Vagina (tissue), 2 donors: ENCODE measurements at regions of chr3 and their contacts with region 1.

Region 1: GRCh38 chr3:105334138-105334882 is 32.4 kb upstream of the ALCAM start:
- DNase-seq: no peak
- H3K4me3 ChIP-seq: no peak overlapping the region
- H3K27ac ChIP-seq: no peak overlapping the region
- H3K4me1 ChIP-seq: no peaks in the 10 kb centered on the region
- H3K27me3 ChIP-seq: no peaks in the 10 kb centered on the region
- CTCF ChIP-seq: no peak
- POLR2A ChIP-seq: no peak

Region 2: DNA sequence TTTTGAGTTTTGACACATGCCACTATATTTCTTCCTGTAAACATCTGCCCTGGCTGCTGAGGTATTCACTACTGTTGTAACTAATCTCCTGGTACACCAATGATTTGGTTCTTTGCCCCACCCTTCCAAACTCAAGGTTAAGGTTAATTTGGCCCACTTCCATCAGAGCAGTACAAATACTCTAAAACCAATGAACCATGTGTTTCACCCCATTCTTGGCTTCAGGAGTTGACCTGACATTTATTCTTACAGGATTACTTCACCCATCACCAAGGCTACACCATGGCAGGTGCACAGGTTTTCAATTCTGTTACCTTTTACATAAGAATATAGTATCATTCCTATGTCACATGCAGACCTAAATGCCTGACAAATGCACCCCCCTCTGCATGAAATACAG is 1719.6 kb before region 1 on chr3:
- intact Hi-C with region 1: loop called (anchors 5 kb)
- DNase-seq: no peak
- H3K4me3 ChIP-seq: no peak overlapping the region
- H3K27ac ChIP-seq: no peak overlapping the region
- H3K4me1 ChIP-seq: no peaks in the 10 kb centered on the region
- H3K27me3 ChIP-seq: no peaks in the 10 kb centered on the region
- CTCF ChIP-seq: no peak
- POLR2A ChIP-seq: no peak

Region 3: DNA sequence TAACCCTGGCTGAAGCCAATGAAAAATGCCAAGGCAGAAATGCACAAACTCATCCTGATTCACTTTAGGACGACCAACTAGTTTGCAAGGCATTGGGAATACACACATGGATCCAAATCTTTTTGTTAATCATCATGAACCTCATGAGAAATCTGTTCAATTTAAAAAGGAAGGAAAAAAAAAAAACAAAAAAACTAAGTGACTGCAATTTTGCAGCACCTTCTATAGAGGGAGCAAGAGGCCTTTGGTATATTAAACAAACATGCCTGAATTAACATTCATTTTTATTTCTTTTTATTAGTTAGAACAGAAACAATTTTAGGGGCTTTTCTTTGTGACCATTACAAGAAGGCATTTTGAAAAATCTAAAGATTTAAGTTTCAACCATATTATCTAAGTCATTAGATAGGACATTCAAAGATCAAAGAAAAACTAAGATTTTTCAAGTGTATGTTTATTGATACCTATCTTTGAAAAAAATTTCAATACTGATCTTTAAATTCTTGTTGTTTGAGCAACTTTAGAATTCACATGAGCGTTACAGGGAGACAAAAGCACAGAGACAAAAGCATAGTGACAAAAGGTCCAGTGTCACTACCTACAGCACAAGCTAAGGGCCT is 352.1 kb after region 1 on chr3:
- intact Hi-C with region 1: no loop called
- DNase-seq: no peak
- H3K4me3 ChIP-seq: no peak overlapping the region
- H3K27ac ChIP-seq: no peak overlapping the region
- H3K4me1 ChIP-seq: no peaks in the 10 kb centered on the region
- H3K27me3 ChIP-seq: no peaks in the 10 kb centered on the region
- CTCF ChIP-seq: peak; percentile 15 to 51 (median 48)
- POLR2A ChIP-seq: no peak